Natural killer cell (primary cell): ENCODE measurements at regions of chr7 and their contacts with region 1.

Region 1: DNA sequence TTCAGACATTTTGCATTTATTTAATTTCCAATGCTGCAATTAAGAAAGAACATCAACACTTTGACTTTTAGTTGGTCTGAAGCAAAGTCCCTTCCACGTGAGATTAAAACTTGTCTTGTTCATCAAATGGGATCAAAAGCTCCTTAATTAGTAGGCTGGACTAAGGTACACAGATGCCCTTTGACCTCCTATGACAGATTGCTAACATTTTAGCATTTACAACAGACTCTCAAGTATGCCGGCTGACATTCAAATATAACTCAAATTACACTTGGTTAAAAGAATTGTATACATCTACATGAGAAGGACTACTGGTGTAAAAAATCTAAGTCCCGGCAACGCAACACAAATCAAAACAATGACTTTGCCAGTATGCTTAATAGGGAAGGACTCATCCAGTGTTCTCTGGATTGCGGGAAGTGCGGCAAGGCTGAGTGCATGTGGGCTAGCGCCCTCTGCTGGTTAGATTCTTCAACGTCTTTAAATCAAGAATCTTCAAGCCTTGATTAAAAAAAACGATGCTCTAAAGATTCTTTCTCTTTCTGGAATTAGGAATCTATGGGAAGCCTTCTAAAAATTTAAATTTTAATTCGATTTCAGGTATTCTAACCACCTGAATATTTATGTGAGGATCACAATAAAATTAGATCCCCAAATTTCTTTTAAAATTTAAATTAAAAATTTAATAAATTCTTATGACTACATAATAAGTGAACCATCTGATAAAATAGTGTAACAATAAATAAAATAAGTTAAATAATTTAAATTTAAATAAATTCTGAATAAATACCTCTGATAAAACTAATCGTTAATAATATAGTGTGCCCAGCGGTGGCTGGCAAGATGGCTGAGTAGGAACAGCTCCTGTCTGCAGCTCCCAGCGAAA is 444.7 kb downstream of the DGKB start:
- DNase-seq: peak; percentile 16 to 72
- ATAC-seq: peak in 1 of 3 donors; percentile 61
- H3K4me3 ChIP-seq: no peak overlapping the region
- H3K4me3 Mint-ChIP-seq: no peak overlapping the region
- H3K27ac ChIP-seq: no peak overlapping the region
- H3K27ac Mint-ChIP-seq: no peak overlapping the region
- H3K4me1 ChIP-seq: no peaks in the 10 kb centered on the region
- H3K4me1 Mint-ChIP-seq: no peaks in the 10 kb centered on the region
- H3K27me3 ChIP-seq: no peaks in the 10 kb centered on the region
- H3K27me3 Mint-ChIP-seq: no peaks in the 10 kb centered on the region
- CTCF ChIP-seq: peak; percentile 82

Region 2: DNA sequence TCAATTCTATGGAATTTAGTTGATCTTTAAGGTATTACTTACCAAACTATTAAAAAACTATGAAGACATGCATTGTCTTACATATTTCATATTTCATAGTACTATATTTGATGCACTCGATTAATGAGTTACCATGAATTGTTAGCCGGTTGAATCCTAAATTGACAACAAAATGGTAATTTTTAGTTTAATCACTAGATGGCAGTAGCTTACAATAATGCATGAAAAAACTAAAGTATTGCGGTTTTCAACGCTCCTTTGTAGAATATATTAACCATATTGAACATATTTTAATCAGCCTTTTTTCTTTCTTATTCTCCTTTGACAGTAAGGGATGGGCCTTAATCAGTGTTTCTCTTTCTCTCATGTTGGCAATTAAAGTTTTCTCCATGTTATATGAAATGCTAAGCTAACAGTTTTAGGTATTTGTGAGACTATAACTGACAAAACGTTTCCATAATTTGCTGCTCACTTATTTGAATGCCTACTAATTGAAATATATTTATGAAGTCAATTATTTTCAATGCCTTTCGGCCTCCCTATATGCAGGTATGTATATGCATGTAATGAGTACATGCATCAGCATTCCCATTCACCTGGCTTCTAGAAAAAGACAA is 1818.9 kb before region 1 on chr7:
- intact Hi-C with region 1: loop called (anchors 5 kb)
- DNase-seq: peak in 1 of 2 donors; percentile 68
- ATAC-seq: peak; percentile 54 to 68 (median 67)
- H3K4me3 ChIP-seq: no peak overlapping the region
- H3K4me3 Mint-ChIP-seq: no peak overlapping the region
- H3K27ac ChIP-seq: no peak overlapping the region
- H3K27ac Mint-ChIP-seq: no peak overlapping the region
- H3K4me1 ChIP-seq: peaks cover under 1% of the 10 kb centered on the region
- H3K4me1 Mint-ChIP-seq: peaks cover 11 to 13% of the 10 kb centered on the region in 2 donors
- H3K27me3 ChIP-seq: no peaks in the 10 kb centered on the region
- H3K27me3 Mint-ChIP-seq: no peaks in the 10 kb centered on the region
- CTCF ChIP-seq: peak; percentile 91

Region 3: GRCh38 chr7:13532028-13532753 is 925.6 kb before region 1 on chr7:
- intact Hi-C with region 1: loop called (anchors 5 kb)
- DNase-seq: peak in 1 of 2 donors; percentile 19
- ATAC-seq: no peak
- H3K4me3 ChIP-seq: no peak overlapping the region
- H3K4me3 Mint-ChIP-seq: no peak overlapping the region
- H3K27ac ChIP-seq: no peak overlapping the region
- H3K27ac Mint-ChIP-seq: no peak overlapping the region
- H3K4me1 ChIP-seq: no peaks in the 10 kb centered on the region
- H3K4me1 Mint-ChIP-seq: no peaks in the 10 kb centered on the region
- H3K27me3 ChIP-seq: no peaks in the 10 kb centered on the region
- H3K27me3 Mint-ChIP-seq: no peaks in the 10 kb centered on the region
- CTCF ChIP-seq: no peak

Region 4: GRCh38 chr7:14209896-14210484 is 247.8 kb before region 1 on chr7:
- intact Hi-C with region 1: no loop called
- DNase-seq: no peak
- ATAC-seq: no peak
- H3K4me3 ChIP-seq: no peak overlapping the region
- H3K4me3 Mint-ChIP-seq: no peak overlapping the region
- H3K27ac ChIP-seq: no peak overlapping the region
- H3K27ac Mint-ChIP-seq: no peak overlapping the region
- H3K4me1 ChIP-seq: no peaks in the 10 kb centered on the region
- H3K4me1 Mint-ChIP-seq: no peaks in the 10 kb centered on the region
- H3K27me3 ChIP-seq: no peaks in the 10 kb centered on the region
- H3K27me3 Mint-ChIP-seq: no peaks in the 10 kb centered on the region
- CTCF ChIP-seq: no peak